OCI-LY7 (cell line): ENCODE measurements at regions of chr9 and their contacts with region 1.

Region 1: GRCh38 chr9:123738648-123739047 is 191.3 kb downstream of the DENND1A start:
- DNase-seq: no peak
- H3K4me3 ChIP-seq: no peak overlapping the region
- H3K27ac ChIP-seq: no peak overlapping the region
- H3K4me1 ChIP-seq: no peaks in the 10 kb centered on the region
- CTCF ChIP-seq: no peak

Region 2: GRCh38 chr9:123727332-123727731 is 11.3 kb before region 1 on chr9:
- CTCF ChIA-PET with region 1: no interaction called
- POLR2A ChIA-PET with region 1: interaction called, 12 read pairs
- intact Hi-C with region 1: no loop called
- DNase-seq: no peak
- H3K4me3 ChIP-seq: no peak overlapping the region
- H3K27ac ChIP-seq: no peak overlapping the region
- H3K4me1 ChIP-seq: no peaks in the 10 kb centered on the region
- CTCF ChIP-seq: no peak